Mammary epithelial cell (primary cell): ENCODE measurements at regions of chr17 and their contacts with region 1.

Region 1: GRCh38 chr17:81683584-81684237 is at the starts of genes ARL16 and HGS:
- DNase-seq: peak; percentile 99
- H3K4me3 ChIP-seq: peak within 1 kb of the TSS; percentile 76 to 94 (median 92)
- H3K27ac ChIP-seq: peak within 1 kb of the TSS; percentile 78
- H3K4me1 ChIP-seq: peaks cover 19% of the 10 kb centered on the region
- H3K27me3 ChIP-seq: no peaks in the 10 kb centered on the region
- CTCF ChIP-seq: no peak
- total RNA-seq, gene ARL16: 19.5 to 27.7 TPM
- total RNA-seq, gene HGS: 88.0 to 140 TPM

Region 2: GRCh38 chr17:81821603-81822311 is 138.0 kb after region 1 on chr17:
- CTCF ChIA-PET with region 1: no interaction called
- dilution Hi-C with region 1: no loop called
- in situ Hi-C with region 1: no loop called
- intact Hi-C with region 1: no loop called
- DNase-seq: peak; percentile 54
- H3K4me3 ChIP-seq: no peak overlapping the region
- H3K27ac ChIP-seq: no peak overlapping the region
- H3K4me1 ChIP-seq: peaks cover 13% of the 10 kb centered on the region
- H3K27me3 ChIP-seq: no peaks in the 10 kb centered on the region
- CTCF ChIP-seq: peak; percentile 58 to 76

Region 3: DNA sequence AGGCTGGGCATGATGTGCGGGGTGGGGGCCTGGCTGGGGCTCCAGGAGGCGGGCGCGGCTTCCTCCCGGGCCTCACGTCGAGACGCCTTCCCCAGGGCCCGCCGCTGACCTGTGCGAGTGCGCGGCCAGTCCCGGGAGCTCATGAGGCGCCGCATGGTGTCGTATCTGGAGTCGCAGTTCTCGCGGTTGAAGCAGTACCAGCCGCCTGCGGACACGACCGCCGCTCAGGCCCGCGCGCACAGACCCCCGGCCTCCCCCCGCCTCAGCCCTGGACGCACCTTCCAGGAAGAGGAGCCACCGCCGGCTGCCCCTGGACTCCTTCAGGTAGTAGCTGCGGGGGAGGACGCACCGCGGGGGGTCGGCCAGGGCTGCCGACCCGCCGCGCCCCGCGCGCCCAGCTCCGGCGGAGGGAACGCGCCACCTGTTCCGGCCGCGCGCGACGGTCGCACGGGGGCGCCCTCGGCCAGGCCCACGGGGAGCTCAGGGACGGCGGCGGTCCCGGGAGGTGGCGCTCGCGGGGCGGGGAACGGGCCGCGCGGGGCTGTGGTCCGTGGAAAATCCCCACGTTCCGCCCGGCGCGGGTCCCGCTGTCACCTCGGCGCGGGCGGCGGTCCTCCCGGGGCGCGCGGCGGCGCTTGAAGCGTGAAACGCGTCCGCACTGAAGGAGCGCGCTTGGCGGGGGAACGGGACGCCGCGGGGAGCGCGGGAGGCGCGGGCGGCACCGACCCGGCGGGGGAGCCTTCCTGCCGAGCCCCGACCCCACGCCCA is 275.8 kb after region 1 on chr17:
- CTCF ChIA-PET with region 1: no interaction called
- dilution Hi-C with region 1: loop called (anchors 10 kb)
- in situ Hi-C with region 1: no loop called
- intact Hi-C with region 1: no loop called
- DNase-seq: peak; percentile 33
- H3K4me3 ChIP-seq: no peak overlapping the region
- H3K27ac ChIP-seq: no peak overlapping the region
- H3K4me1 ChIP-seq: peaks cover 13% of the 10 kb centered on the region
- H3K27me3 ChIP-seq: peaks cover 26% of the 10 kb centered on the region
- CTCF ChIP-seq: peak; percentile 51 to 65